ENCODE measurements at regions of chr6 and their contacts with region 1.

Region 1: GRCh38 chr6:26156076-26156849 is 69.0 kb downstream of the HFE start:
- DNase-seq: peak; percentile 90 to 96
- ATAC-seq: peak; percentile 82 to 86 (median 84)
- H3K4me3 ChIP-seq: peak overlapping the region; percentile 88
- H3K27ac ChIP-seq: peak overlapping the region; percentile 98
- H3K4me1 ChIP-seq: peaks cover 15% of the 10 kb centered on the region
- H3K27me3 ChIP-seq: no peaks in the 10 kb centered on the region
- CTCF ChIP-seq: no peak

Region 2: GRCh38 chr6:26054857-26055669 is 101.2 kb before region 1 on chr6:
- intact Hi-C with region 1: loop called in 1 of 2 experiments (anchors 1 kb)
- DNase-seq: peak; percentile 80 to 86
- ATAC-seq: peak; percentile 73 to 81 (median 76)
- H3K4me3 ChIP-seq: peak overlapping the region; percentile 85
- H3K27ac ChIP-seq: peak overlapping the region; percentile 95
- H3K4me1 ChIP-seq: peaks cover 7% of the 10 kb centered on the region
- H3K27me3 ChIP-seq: no peaks in the 10 kb centered on the region
- CTCF ChIP-seq: no peak

Region 3: DNA sequence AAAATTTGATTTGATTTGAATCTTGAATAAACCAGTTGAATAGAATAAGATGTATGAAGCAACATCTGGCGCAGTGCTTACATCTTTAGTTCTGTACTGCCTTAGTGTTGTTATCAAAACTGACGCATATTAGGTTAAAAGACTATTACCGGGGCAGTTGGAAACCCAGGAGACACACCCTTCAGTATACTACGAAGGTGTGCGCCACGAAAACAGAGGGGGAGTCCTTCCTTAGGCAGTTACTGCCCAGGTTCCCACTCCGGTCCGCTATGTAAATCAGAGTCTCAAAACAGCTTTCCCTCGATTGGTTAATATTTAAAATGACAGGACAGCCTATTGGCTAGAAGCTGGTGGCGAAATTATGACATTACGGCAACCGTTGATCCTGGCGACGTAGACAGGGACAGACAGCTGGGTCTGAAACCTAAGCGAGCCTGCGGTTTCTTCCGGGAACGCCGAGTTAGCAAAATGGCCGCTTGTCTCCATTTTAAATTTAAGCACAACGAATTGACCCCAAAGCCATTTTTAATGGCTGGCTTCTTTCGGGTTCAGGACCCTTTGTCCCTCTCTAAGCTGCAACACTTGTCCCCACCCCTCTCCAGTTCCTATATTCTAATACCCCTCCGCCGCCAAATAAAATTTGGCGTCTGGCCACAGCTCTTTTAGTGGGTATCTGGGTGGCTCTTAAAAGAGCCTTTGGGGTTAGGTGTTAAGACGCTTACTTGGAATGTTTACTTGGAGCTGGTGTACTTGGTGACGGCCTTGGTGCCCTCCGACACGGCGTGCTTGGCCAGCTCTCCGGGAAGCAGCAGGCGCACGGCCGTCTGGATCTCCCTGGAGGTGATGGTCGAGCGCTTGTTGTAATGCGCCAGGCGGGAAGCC is 33.2 kb before region 1 on chr6:
- intact Hi-C with region 1: loop called (anchors 1 to 2 kb)
- DNase-seq: peak; percentile 93 to 95
- ATAC-seq: peak; percentile 85 to 89 (median 88)
- H3K4me3 ChIP-seq: peak overlapping the region; percentile 87
- H3K27ac ChIP-seq: peak overlapping the region; percentile 97
- H3K4me1 ChIP-seq: peaks cover 17% of the 10 kb centered on the region
- H3K27me3 ChIP-seq: no peaks in the 10 kb centered on the region
- CTCF ChIP-seq: no peak

Region 4: GRCh38 chr6:27777614-27778355 is 1621.5 kb after region 1 on chr6:
- intact Hi-C with region 1: no loop called
- DNase-seq: no peak
- ATAC-seq: no peak
- H3K4me3 ChIP-seq: no peak overlapping the region
- H3K27ac ChIP-seq: no peak overlapping the region
- H3K4me1 ChIP-seq: no peaks in the 10 kb centered on the region
- H3K27me3 ChIP-seq: no peaks in the 10 kb centered on the region
- CTCF ChIP-seq: no peak